Naive thymus-derived CD4-positive, alpha-beta T cell (primary cell): ENCODE measurements at regions of chr14 and their contacts with region 1.

Region 1: GRCh38 chr14:31207755-31208545 is at the start of gene HECTD1:
- DNase-seq: peak in 8 of 9 donors; percentile 89 to 94 (median 92)
- ATAC-seq: peak; percentile 83
- H3K4me3 ChIP-seq: peak within 1 kb of the TSS; percentile 70
- H3K4me3 Mint-ChIP-seq: peak within 1 kb of the TSS; percentile 93 to 98 (median 96)
- H3K27ac ChIP-seq: peak within 1 kb of the TSS; percentile 100
- H3K27ac Mint-ChIP-seq: peak within 1 kb of the TSS; percentile 99 to 100 (median 99)
- H3K4me1 ChIP-seq: peaks cover 30 to 33% of the 10 kb centered on the region in 2 donors
- H3K4me1 Mint-ChIP-seq: peaks cover 33 to 68% (median 62%) of the 10 kb centered on the region in 7 donors
- H3K27me3 ChIP-seq: no peaks in the 10 kb centered on the region
- H3K27me3 Mint-ChIP-seq: no peaks in the 10 kb centered on the region
- total RNA-seq, gene HECTD1: 115 to 163 (median 158) TPM

Region 2: DNA sequence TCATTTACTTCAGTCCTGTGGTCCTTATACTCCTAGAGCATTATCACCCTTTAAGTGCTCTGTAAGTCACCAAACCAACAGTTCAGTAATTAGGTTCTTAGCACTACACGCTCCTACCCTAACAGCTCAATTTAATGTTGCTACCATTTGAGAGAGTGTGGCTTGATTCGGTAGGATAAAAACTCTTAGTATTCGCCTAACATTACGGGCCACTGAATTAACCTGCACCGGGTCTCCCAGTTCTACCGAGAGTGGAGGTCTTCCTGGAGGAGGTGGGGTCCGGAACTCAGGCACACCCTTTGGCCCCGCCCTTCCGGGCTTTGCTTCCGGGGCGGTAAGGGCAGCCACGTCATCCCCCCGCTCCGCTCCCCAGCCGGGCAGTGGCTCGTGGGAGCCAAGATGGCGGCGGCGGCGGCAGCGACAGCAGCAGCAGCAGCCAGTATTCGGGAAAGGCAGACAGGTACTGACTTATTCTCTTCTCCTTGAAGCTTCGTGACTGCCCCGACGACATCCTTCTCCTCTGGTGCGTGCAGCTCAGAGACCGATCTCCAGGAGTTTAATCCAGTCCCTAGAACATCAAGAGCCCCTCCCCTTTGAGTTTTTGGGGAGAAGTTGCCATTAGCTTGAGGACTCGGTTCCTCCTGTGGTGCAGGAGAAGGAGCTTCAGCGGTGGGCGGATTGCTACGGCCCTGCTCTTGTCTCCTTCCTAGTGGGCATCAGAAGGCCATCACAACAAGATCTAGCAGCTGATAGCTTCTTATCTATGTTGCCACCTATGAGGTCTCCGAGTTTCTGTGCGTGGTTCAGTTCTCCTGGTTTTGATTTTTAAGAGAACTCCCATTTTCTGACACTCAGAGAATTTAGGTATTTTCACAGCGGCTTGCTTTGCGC is 585.8 kb before region 1 on chr14 and contains the start of gene SCFD1:
- CTCF ChIA-PET with region 1: no interaction called
- POLR2A ChIA-PET with region 1: interaction called, 6 read pairs
- intact Hi-C with region 1: loop called (anchors 1 to 2 kb)
- DNase-seq: peak; percentile 86 to 94 (median 91)
- ATAC-seq: peak; percentile 99
- H3K4me3 ChIP-seq: peak within 1 kb of the TSS; percentile 97
- H3K4me3 Mint-ChIP-seq: peak within 1 kb of the TSS; percentile 95 to 100 (median 97)
- H3K27ac ChIP-seq: peak within 1 kb of the TSS; percentile 86
- H3K27ac Mint-ChIP-seq: peak within 1 kb of the TSS; percentile 86 to 98 (median 95)
- H3K4me1 ChIP-seq: peaks cover 14 to 26% of the 10 kb centered on the region in 2 donors
- H3K4me1 Mint-ChIP-seq: peaks cover 14 to 58% (median 44%) of the 10 kb centered on the region in 7 donors
- H3K27me3 ChIP-seq: no peaks in the 10 kb centered on the region
- H3K27me3 Mint-ChIP-seq: no peaks in the 10 kb centered on the region
- total RNA-seq, gene SCFD1: 63.2 to 75.4 (median 68.2) TPM

Region 3: DNA sequence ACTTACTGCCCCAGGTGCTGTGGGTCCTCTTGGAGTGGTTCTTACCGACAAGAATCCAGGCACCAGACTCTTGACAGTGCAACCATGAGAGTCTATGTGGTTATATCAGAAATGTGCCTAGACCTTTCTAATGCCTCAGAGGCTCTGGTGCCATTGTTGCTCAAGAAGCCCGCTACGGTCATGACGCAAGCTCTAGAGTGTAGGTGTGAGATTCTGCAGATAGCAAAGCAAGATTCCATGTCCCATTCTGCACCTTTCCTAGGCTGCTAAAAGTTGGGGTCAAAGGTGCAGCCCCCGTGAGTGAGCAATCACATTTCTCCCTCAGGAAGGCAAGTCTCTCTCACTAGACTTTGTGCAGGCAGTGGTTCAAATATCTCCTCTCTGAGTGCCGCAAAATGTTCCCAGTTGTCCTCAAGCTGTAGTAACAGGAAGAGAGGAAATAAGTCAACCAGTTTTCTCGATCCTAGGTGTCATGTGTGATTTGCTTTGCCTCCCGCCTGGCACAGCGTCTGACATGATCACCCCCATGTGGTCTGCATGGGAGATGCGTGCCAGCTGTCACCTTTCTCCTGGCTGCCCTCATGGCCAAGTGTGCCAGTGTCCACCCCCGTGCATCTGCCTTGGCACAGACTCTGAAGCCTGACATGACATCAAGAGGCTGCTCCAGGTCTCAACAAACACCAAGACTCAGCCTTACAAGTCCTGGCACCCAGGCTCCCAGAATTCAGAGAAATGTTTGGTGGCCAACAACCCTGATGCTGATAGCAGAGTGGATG is 456.1 kb before region 1 on chr14:
- CTCF ChIA-PET with region 1: no interaction called
- POLR2A ChIA-PET with region 1: no interaction called
- intact Hi-C with region 1: no loop called
- DNase-seq: peak in 2 of 9 donors; percentile 2 to 4
- ATAC-seq: no peak
- H3K4me3 ChIP-seq: no peak overlapping the region
- H3K4me3 Mint-ChIP-seq: no peak overlapping the region
- H3K27ac ChIP-seq: no peak overlapping the region
- H3K27ac Mint-ChIP-seq: no peak overlapping the region
- H3K4me1 ChIP-seq: no peaks in the 10 kb centered on the region
- H3K4me1 Mint-ChIP-seq: no peaks in the 10 kb centered on the region
- H3K27me3 ChIP-seq: no peaks in the 10 kb centered on the region
- H3K27me3 Mint-ChIP-seq: peaks cover 4 to 17% (median 9%) of the 10 kb centered on the region in 5 donors

Region 4: DNA sequence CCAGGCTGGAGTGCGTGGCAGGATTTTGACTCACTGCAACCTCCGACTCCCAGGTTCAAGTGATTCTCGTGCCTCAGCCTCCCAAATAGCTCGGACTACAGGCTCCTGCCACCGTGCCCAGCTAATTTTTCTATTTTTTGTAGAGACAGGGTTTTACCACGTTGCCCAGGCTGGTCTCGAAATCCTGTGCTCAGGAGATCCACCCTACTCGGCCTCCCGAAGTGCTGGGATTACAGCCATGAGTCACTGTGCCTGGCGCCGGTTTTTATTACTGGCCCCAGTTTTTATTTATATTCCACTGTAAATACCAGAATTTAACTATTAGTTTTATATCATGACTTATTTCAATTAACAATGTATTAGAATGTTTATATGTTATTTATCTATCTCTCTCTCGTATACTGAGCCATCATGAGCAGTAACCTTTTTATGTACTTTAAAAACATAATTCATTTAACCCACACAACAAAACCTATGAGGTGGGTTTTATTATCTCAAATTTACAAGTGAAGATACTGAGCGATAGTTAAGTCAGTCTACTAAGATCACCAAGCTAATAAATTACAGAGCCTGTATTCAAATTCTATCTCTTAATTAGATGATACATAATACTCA is 48.2 kb before region 1 on chr14:
- CTCF ChIA-PET with region 1: no interaction called
- POLR2A ChIA-PET with region 1: interaction called, 3 read pairs
- intact Hi-C with region 1: loop called in 1 of 2 experiments (anchors 10 kb)
- DNase-seq: no peak
- ATAC-seq: no peak
- H3K4me3 ChIP-seq: no peak overlapping the region
- H3K4me3 Mint-ChIP-seq: no peak overlapping the region
- H3K27ac ChIP-seq: no peak overlapping the region
- H3K27ac Mint-ChIP-seq: no peak overlapping the region
- H3K4me1 ChIP-seq: no peaks in the 10 kb centered on the region
- H3K4me1 Mint-ChIP-seq: peaks cover 0 to 5% (median 0%) of the 10 kb centered on the region in 7 donors
- H3K27me3 ChIP-seq: no peaks in the 10 kb centered on the region
- H3K27me3 Mint-ChIP-seq: no peaks in the 10 kb centered on the region

Region 5: GRCh38 chr14:31270196-31270772 is 62.3 kb after region 1 on chr14:
- CTCF ChIA-PET with region 1: no interaction called
- POLR2A ChIA-PET with region 1: interaction called, 6 read pairs
- intact Hi-C with region 1: loop called in 1 of 2 experiments (anchors 5 kb)
- DNase-seq: peak in 1 of 9 donors; percentile 26
- ATAC-seq: no peak
- H3K4me3 ChIP-seq: no peak overlapping the region
- H3K4me3 Mint-ChIP-seq: no peak overlapping the region
- H3K27ac ChIP-seq: no peak overlapping the region
- H3K27ac Mint-ChIP-seq: no peak overlapping the region
- H3K4me1 ChIP-seq: no peaks in the 10 kb centered on the region
- H3K4me1 Mint-ChIP-seq: peaks cover 0 to 10% (median 0%) of the 10 kb centered on the region in 7 donors
- H3K27me3 ChIP-seq: no peaks in the 10 kb centered on the region
- H3K27me3 Mint-ChIP-seq: no peaks in the 10 kb centered on the region

Region 6: DNA sequence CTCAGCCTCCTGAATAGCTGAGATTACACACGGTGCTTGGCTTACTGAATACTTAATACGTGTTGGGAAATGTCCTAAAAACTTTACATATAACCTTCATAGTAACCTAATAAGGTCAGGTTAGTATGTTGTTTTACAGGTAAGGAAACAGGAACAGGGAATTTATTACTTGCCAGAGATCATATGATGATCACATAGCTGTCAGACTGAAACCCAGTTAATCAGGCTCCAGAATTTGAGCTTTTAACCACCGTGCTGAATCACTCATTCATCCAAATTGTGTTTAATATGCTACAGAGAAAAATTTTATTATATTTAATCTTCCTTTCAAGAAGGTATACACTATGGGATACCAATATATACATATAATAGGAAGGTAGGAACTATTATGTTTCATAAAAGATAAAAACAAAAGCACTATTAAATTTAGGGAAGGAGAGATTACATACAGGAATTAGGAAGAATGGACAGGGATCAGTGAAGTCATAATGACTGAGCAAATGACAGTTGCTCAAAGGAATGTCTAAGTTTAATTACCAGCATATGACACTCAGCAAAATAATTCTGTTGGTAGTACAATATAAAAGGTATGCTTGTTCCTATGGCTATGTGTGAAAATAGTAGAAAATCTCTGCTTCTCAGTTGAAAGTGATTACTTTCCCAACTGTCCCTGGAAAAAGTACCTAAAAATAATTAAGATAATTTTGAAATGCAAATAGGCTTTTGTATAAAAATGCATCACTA is 153.1 kb after region 1 on chr14:
- CTCF ChIA-PET with region 1: no interaction called
- POLR2A ChIA-PET with region 1: no interaction called
- intact Hi-C with region 1: loop called (anchors 1 kb)
- DNase-seq: no peak
- ATAC-seq: no peak
- H3K4me3 ChIP-seq: no peak overlapping the region
- H3K4me3 Mint-ChIP-seq: no peak overlapping the region
- H3K27ac ChIP-seq: no peak overlapping the region
- H3K27ac Mint-ChIP-seq: no peak overlapping the region
- H3K4me1 ChIP-seq: no peaks in the 10 kb centered on the region
- H3K4me1 Mint-ChIP-seq: peaks cover 0 to under 1% (median 0%) of the 10 kb centered on the region in 7 donors
- H3K27me3 ChIP-seq: no peaks in the 10 kb centered on the region
- H3K27me3 Mint-ChIP-seq: no peaks in the 10 kb centered on the region

Region 7: GRCh38 chr14:31561155-31561846 is 353.4 kb after region 1 on chr14 and contains the start of gene NUBPL:
- CTCF ChIA-PET with region 1: no interaction called
- POLR2A ChIA-PET with region 1: no interaction called
- intact Hi-C with region 1: loop called (anchors 1 kb)
- DNase-seq: peak; percentile 96 to 98 (median 97)
- ATAC-seq: peak; percentile 95
- H3K4me3 ChIP-seq: peak within 1 kb of the TSS; percentile 90
- H3K4me3 Mint-ChIP-seq: peak within 1 kb of the TSS; percentile 88 to 98 (median 96)
- H3K27ac ChIP-seq: peak within 1 kb of the TSS; percentile 81
- H3K27ac Mint-ChIP-seq: peak within 1 kb of the TSS; percentile 95 to 100 (median 99)
- H3K4me1 ChIP-seq: peaks cover 0 to 5% of the 10 kb centered on the region in 2 donors
- H3K4me1 Mint-ChIP-seq: peaks cover 24 to 44% (median 38%) of the 10 kb centered on the region in 7 donors
- H3K27me3 ChIP-seq: no peaks in the 10 kb centered on the region
- H3K27me3 Mint-ChIP-seq: peaks cover 0 to 11% (median 5%) of the 10 kb centered on the region in 5 donors
- total RNA-seq, gene NUBPL: 6.1 to 11.7 (median 8.3) TPM